PC-3 (cell line): ENCODE measurements at regions of chr6 and their contacts with region 1.

Region 1: GRCh38 chr6:32168807-32169591 is 4.6 kb downstream of the EGFL8 start:
- DNase-seq: no peak
- ATAC-seq: peak; percentile 29; the same call in 1 of the 2 replicates
- H3K4me3 ChIP-seq: no peak overlapping the region
- H3K27ac ChIP-seq: no peak overlapping the region
- H3K4me1 ChIP-seq: no peaks in the 10 kb centered on the region
- H3K27me3 ChIP-seq: no peaks in the 10 kb centered on the region
- CTCF ChIP-seq: 0 out of 2 replicates have a peak, but pooled peaks have one; percentile 12

Region 2: DNA sequence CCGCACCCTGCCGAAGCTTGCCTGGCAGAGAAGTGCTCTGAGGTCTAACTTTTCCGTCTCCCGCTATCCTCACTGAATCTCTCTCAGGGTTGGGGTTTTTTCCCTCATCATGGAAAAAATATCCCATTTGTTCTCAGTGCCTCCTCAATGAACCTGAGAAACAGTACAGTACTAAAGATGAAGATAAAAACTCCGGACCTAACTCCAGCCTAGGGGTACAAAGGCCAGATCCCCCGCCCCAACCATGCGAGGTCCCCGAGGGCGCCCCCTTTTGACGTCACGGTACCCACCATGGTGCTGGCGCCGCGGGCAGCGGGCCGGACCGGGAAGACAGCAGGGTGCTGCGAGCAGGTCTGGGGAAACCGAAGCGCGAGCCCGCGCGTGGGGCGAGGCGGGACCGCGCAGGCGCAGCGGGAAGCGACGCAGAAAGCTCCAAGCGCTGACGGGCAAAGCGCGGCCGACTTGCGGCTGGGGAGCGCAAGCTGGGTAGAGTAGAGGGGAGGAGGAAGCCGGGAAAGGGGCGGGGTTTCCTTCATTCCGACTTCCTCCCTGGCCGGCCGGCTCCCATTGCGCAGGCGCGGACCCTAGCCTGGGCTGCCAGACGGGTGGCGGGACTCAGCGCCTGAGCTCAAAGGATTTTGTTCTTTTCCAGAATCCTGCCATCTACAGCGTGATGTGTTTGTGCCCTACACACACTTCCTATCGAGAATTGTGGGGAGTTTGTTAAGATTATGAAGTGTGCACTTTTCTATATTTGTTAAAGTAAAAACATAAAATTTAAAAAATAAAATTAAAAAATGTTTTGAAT is 362.3 kb before region 1 on chr6 and contains the start of gene LSM2:
- CTCF ChIA-PET with region 1: interaction called, 16 read pairs
- POLR2A ChIA-PET with region 1: no interaction called
- intact Hi-C with region 1: no loop called
- DNase-seq: peak; percentile 96
- ATAC-seq: peak; percentile 99
- H3K4me3 ChIP-seq: peak within 1 kb of the TSS; percentile 73
- H3K27ac ChIP-seq: peak within 1 kb of the TSS; percentile 53
- H3K4me1 ChIP-seq: peaks cover 6% of the 10 kb centered on the region
- H3K27me3 ChIP-seq: no peaks in the 10 kb centered on the region
- CTCF ChIP-seq: peak; percentile 55
- total RNA-seq, gene LSM2: 93.7 and 143 TPM in 2 replicates

Region 3: GRCh38 chr6:32223258-32224235 is 54.5 kb after region 1 on chr6 and contains the start of gene NOTCH4:
- CTCF ChIA-PET with region 1: interaction called, 12 read pairs
- POLR2A ChIA-PET with region 1: no interaction called
- intact Hi-C with region 1: no loop called
- DNase-seq: no peak
- ATAC-seq: no peak
- H3K4me3 ChIP-seq: no peak within 1 kb of the TSS
- H3K27ac ChIP-seq: no peak within 1 kb of the TSS
- H3K4me1 ChIP-seq: no peaks in the 10 kb centered on the region
- H3K27me3 ChIP-seq: peaks cover 16% of the 10 kb centered on the region
- CTCF ChIP-seq: no peak
- total RNA-seq, gene NOTCH4: 1.7 and 1.8 TPM in 2 replicates

Region 4: DNA sequence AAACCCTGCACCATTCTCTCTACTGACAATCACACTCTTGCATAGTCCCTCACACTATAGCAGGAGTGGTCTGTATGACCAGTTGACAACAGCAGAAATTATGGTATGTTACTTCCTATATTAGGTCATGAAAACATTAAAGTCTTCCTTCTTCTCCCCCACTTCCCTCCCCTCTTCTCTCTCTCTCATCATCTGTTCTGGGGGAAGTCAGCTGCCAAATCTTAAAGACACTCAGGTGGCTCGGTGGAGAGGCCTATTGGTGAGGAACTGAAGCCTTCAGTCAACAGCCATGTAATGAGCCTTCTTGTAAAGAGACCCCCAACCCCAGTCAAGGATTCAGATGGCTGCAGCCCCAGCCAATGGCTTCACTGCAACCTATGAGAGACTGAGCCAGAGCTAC is 213.8 kb after region 1 on chr6:
- CTCF ChIA-PET with region 1: no interaction called
- POLR2A ChIA-PET with region 1: no interaction called
- intact Hi-C with region 1: no loop called
- DNase-seq: no peak
- ATAC-seq: no peak
- H3K4me3 ChIP-seq: no peak overlapping the region
- H3K27ac ChIP-seq: no peak overlapping the region
- H3K4me1 ChIP-seq: no peaks in the 10 kb centered on the region
- H3K27me3 ChIP-seq: no peaks in the 10 kb centered on the region
- CTCF ChIP-seq: no peak